ENCODE measurements at regions of chr7 and their contacts with region 1.

Region 1: GRCh38 chr7:45923290-45923689 is 2.2 kb upstream of the IGFBP3 start:
- DNase-seq: no peak
- H3K4me3 ChIP-seq: no peak overlapping the region
- CTCF ChIP-seq: peak; percentile 87

Region 2: GRCh38 chr7:44986218-44987053 is 936.9 kb before region 1 on chr7:
- CTCF ChIA-PET with region 1: no interaction called
- POLR2A ChIA-PET with region 1: no interaction called
- DNase-seq: peak; percentile 59
- H3K4me3 ChIP-seq: peak overlapping the region; percentile 88
- CTCF ChIP-seq: no peak

Region 3: DNA sequence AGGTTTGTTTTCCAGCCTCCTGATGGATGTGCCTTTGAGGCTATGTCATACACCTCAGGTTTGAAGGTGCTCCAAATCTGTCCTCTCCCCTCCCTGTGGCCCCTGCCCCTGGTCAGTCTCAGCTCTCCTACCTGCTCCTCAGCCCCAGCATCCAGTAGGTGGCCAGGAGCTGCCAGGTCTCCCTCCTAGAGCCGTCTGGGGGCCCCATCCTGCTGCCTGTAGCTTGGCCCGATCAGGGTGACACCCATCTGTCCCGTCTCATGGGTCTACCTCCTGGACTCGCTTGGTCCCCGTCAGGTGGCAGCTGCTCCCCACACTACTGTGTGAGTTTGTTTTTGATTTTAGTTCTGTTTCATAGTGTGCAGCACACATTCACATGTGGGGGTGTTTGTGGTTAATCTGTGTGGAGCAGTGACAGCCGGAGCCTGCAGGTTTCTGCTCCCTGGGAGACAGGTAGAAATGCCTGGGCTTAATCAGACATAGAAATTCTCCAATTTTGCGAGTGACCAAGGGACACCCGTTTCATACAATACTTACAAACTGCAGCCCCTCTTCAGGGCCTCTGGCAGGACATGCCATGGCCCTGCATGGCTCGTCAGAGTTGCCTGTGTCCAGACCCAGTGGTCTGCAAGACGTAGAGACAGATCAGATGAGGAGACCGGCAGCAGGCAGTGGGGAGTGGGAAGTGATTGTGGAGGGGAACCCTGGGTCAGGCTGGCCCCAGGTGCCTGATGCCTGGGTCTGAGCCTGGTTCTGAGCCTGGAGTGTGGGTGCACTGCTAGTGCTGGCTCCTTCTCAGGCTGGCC is 332.0 kb before region 1 on chr7:
- CTCF ChIA-PET with region 1: no interaction called
- POLR2A ChIA-PET with region 1: no interaction called
- DNase-seq: no peak
- H3K4me3 ChIP-seq: no peak overlapping the region
- CTCF ChIP-seq: no peak

Region 4: DNA sequence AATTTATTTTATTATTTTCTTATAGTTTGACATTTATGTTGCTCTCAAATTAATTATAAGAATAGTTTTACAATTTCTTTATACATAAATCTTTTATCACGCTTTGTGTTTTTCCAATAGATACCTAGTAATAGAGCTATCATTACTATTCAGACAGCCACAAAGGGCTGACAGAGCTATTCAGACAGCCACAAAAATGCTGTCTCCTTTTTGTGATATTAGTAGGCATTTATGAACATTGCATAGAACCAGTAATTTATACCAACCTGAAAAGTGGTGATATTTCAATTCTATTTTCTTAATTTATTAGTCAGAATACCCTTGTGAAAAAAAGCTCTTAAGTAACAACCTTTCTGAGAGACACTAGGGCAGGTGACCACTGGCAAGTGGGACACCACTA is 32.0 kb after region 1 on chr7:
- CTCF ChIA-PET with region 1: interaction called, 11 read pairs
- POLR2A ChIA-PET with region 1: no interaction called
- DNase-seq: no peak
- H3K4me3 ChIP-seq: no peak overlapping the region
- CTCF ChIP-seq: no peak

Region 5: DNA sequence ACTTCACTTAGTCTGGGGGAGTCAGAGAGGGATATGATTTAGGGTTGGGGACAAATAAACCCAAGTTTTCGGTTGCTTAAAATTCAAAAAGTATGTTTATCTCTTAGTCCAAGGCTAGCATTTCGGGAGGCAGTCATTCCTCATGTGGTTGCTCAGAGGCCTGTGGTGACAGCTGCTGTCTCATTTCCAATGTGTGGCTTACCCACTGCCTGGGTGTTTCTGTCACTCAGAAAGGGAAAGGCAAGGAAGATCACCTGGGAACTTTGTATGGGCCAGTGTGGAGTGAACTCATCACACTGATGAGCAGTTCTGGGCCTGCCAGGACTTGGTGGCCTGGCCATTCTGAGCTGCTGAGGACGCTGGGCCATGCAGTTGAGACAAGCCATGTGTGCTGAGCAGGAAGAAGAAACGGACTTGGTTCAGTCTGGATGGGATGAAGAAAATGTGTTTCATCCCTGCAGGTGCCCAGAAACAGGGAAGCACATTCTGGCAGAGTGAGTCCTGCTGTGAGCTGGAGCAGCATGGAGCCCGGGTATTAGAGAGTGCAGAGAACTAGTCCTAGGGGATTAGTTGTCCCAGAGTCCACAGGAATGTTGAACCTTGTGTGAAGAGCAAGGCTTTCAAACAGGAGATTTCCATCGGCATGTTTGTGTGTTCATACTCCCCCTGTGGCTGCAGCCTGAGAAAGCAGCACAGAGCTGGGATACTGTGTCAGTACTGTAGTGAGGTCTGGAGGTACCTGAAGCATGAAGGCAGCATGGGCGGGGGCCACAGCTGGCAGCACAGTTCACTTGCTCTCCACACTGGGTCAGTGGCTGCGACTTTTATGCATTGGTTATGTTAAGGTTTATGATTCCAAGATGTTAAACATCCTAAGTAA is 208.9 kb after region 1 on chr7:
- CTCF ChIA-PET with region 1: interaction called, 37 read pairs
- POLR2A ChIA-PET with region 1: no interaction called
- DNase-seq: no peak
- H3K4me3 ChIP-seq: no peak overlapping the region
- CTCF ChIP-seq: peak; percentile 48

Region 6: DNA sequence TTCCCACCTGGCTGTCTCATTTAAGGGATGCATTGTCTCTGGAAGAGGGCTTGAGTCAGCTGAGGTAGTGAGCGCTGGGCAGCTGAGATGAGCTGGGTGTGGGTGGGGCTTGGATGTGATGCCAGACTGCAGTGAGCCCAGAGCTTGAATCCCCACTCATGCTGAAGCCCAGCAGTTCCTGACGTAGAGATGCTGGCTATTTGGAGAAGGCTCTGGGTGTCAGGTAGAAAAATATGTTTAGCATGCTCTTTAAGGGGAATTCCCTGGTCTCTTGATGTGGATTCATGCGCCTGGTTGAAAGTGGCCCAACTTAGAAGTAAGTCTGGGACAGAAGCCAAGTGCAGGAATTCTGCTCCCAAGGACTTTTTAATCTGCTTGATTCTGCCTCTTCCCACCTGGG is 239.3 kb after region 1 on chr7:
- CTCF ChIA-PET with region 1: interaction called, 15 read pairs
- POLR2A ChIA-PET with region 1: no interaction called
- DNase-seq: no peak
- H3K4me3 ChIP-seq: no peak overlapping the region
- CTCF ChIP-seq: no peak

Region 7: GRCh38 chr7:46282155-46282554 is 358.9 kb after region 1 on chr7:
- CTCF ChIA-PET with region 1: interaction called, 10 read pairs
- POLR2A ChIA-PET with region 1: no interaction called
- DNase-seq: no peak
- H3K4me3 ChIP-seq: no peak overlapping the region
- CTCF ChIP-seq: no peak

Region 8: GRCh38 chr7:46357290-46357689 is 434.0 kb after region 1 on chr7:
- CTCF ChIA-PET with region 1: interaction called, 320 read pairs
- POLR2A ChIA-PET with region 1: interaction called, 4 read pairs
- DNase-seq: no peak
- H3K4me3 ChIP-seq: no peak overlapping the region
- CTCF ChIP-seq: no peak

Region 9: DNA sequence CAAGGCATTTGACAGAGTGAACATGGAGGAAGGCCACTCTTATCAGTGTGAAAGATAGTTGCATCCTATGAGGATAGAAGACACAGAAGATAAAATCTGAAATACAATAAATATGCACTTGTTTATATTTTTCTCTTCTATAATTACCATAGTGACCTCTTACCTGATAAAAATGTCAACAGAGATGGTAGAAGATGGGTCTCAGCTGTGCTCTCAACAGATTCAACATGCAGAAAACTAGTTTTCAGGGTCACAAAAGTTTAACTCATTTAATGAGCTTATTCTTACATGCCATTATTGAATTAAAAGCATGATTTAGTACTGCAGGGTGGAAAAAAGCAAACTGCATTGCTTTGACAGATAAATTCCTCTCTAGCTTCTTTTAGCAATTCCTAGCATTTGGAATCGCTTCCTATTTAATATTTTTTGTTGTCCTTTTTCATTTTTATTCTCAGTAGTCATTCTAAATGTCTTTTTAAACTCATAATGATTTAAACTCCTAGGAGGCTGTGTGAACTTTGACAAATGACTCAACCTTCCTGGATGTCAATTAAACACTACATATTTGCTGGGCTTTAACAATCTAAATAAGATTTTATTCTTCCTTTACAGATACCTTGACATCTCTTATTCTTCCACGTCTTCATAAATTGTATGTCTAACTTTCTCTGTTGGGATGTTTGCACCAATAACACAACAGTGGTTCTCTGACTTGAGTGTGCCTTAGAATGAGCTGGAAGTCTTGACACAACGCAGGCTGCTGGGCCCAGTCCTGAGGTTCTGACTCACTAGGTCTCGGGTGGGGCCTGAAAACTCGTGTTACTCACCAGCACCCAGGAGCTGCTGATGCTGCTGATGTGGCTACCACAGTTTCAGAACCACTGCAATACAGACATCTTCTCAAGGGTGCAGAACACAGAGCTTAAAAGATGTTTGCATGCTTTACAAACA is 563.2 kb after region 1 on chr7:
- CTCF ChIA-PET with region 1: interaction called, 11 read pairs
- POLR2A ChIA-PET with region 1: no interaction called
- DNase-seq: peak; percentile 58
- H3K4me3 ChIP-seq: no peak overlapping the region
- CTCF ChIP-seq: no peak